ENCODE measurements at regions of chr13 and their contacts with region 1.

Region 1: DNA sequence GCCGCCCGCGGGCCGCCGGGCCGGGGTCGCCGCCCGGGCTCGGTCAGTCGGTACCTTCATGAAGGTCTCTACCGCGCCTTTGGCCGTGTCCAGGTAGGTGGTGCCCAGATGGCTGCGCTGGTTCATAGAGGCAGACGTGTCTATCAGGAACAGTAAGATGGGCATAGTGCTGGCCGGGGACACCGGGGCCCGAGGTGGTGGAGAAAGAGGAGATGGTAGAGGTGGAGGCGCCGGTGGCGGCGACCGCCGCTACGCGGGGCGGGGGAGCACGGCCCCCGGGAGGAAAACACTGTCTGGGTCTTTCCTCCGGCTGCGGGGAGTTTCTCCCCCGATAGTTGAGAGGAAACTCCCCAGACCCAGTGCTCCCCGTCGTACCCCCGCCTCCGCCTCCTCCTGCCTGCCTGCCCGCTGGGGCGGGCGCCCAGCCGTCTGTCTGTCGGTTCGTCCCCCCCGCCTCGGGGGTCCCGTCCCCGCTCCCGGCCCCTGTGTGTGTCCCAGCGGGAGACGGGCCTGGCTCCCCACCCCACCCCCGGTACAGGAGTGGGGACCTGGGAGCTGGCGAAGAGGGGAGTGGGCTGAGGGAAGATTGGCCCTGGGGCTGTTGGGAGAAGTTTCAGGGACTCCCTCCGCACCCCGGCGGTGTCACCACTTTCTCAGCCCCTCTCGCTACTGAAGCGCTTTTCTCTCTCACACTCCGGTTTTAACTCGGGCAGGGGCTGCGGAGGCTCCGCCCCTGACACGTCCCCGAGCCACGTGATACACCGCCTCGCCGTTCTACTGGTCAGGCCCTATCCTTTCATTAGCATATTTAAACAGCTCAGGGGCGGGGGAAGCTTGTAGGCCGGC is at the start of gene INTS6:
- DNase-seq: peak; percentile 98
- H3K4me3 ChIP-seq: peak within 1 kb of the TSS; percentile 88
- H3K27ac ChIP-seq: peak within 1 kb of the TSS; percentile 90
- H3K27me3 ChIP-seq: no peaks in the 10 kb centered on the region
- CTCF ChIP-seq: no peak
- polyA plus RNA-seq, gene INTS6: 38.1 and 53.7 TPM in 2 replicates

Region 2: GRCh38 chr13:51475727-51476501 is 23.3 kb after region 1 on chr13:
- CTCF ChIA-PET with region 1: no interaction called
- POLR2A ChIA-PET with region 1: interaction called, 27 read pairs
- DNase-seq: no peak
- H3K4me3 ChIP-seq: no peak overlapping the region
- H3K27ac ChIP-seq: no peak overlapping the region
- H3K27me3 ChIP-seq: no peaks in the 10 kb centered on the region
- CTCF ChIP-seq: no peak

Region 3: DNA sequence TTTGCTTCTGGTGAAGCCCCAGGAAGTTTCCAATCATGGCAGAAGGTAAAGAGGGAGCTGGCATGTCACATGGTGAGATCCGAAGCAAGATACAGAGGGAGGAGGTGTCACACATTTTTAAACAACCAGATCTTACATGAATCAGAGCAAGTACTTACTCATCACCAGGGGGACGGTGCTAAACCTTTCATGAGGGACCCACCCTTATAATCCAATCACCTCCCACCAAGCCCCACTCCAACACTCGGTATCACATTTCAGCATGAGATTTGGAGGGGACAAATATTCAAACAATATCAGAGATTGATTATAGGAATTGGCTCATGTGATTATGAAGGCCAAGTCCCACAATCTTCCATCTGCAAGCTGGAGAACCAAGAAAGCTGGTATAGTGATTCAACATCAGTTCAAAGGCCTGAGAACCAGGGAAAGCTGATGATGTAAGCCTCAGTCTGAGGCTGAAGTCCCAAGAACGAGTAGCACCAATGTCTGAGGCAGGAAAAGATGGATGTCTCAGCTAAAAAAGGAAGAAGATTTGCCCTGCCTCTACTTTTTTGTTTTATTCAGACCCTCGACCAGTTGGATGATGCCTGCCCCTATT is 73.1 kb after region 1 on chr13:
- CTCF ChIA-PET with region 1: no interaction called
- POLR2A ChIA-PET with region 1: interaction called, 28 read pairs
- DNase-seq: no peak
- H3K4me3 ChIP-seq: no peak overlapping the region
- H3K27ac ChIP-seq: no peak overlapping the region
- H3K27me3 ChIP-seq: no peaks in the 10 kb centered on the region
- CTCF ChIP-seq: no peak

Region 4: GRCh38 chr13:51590971-51591627 is 138.5 kb after region 1 on chr13:
- CTCF ChIA-PET with region 1: interaction called, 5 read pairs
- POLR2A ChIA-PET with region 1: interaction called, 53 read pairs
- DNase-seq: peak; percentile 47
- H3K4me3 ChIP-seq: no peak overlapping the region; the same call in 1 of the 2 replicates
- H3K27ac ChIP-seq: peak overlapping the region; percentile 54
- H3K27me3 ChIP-seq: no peaks in the 10 kb centered on the region
- CTCF ChIP-seq: 0 out of 2 replicates have a peak, but pooled peaks have one; percentile 6

Region 5: GRCh38 chr13:51645154-51645650 is 192.6 kb after region 1 on chr13:
- CTCF ChIA-PET with region 1: no interaction called
- POLR2A ChIA-PET with region 1: interaction called, 20 read pairs
- DNase-seq: no peak
- H3K4me3 ChIP-seq: no peak overlapping the region
- H3K27ac ChIP-seq: peak overlapping the region; percentile 49
- H3K27me3 ChIP-seq: no peaks in the 10 kb centered on the region
- CTCF ChIP-seq: 0 out of 2 replicates have a peak, but pooled peaks have one; percentile 12

Region 6: GRCh38 chr13:51729866-51730546 is 277.4 kb after region 1 on chr13:
- CTCF ChIA-PET with region 1: no interaction called
- POLR2A ChIA-PET with region 1: interaction called, 10 read pairs
- DNase-seq: peak; percentile 44
- H3K4me3 ChIP-seq: no peak overlapping the region; the same call in 1 of the 2 replicates
- H3K27ac ChIP-seq: peak overlapping the region; percentile 82
- H3K27me3 ChIP-seq: no peaks in the 10 kb centered on the region
- CTCF ChIP-seq: no peak

Region 7: GRCh38 chr13:51785712-51786424 is 333.3 kb after region 1 on chr13:
- CTCF ChIA-PET with region 1: no interaction called
- POLR2A ChIA-PET with region 1: interaction called, 10 read pairs
- DNase-seq: no peak
- H3K4me3 ChIP-seq: no peak overlapping the region
- H3K27ac ChIP-seq: no peak overlapping the region
- H3K27me3 ChIP-seq: no peaks in the 10 kb centered on the region
- CTCF ChIP-seq: no peak

Region 8: DNA sequence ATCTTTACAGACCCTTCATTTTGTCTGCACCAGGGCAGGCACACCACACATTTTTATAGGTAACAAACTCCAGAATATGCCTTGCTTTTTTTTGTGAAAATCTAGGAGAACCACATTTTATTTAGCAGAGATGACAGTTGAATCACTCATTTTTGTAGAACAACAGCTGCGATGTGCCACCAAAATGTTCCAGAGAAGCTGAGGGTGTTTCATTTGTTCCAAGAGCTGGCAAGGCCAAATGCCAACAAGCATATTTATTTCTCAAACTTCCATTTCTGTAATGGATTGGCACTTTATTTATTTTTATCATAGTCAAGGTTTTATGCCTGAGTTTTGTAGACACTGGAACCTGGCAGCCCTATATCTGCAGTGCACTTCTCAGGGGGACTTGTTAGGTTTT is 1586.4 kb after region 1 on chr13:
- CTCF ChIA-PET with region 1: no interaction called
- POLR2A ChIA-PET with region 1: no interaction called
- DNase-seq: no peak
- H3K4me3 ChIP-seq: no peak overlapping the region
- H3K27ac ChIP-seq: no peak overlapping the region
- H3K27me3 ChIP-seq: no peaks in the 10 kb centered on the region
- CTCF ChIP-seq: no peak

Measured in AG04450 (cell line).